GM10248 (cell line): ENCODE measurements at regions of chr3 and their contacts with region 1.

Region 1: DNA sequence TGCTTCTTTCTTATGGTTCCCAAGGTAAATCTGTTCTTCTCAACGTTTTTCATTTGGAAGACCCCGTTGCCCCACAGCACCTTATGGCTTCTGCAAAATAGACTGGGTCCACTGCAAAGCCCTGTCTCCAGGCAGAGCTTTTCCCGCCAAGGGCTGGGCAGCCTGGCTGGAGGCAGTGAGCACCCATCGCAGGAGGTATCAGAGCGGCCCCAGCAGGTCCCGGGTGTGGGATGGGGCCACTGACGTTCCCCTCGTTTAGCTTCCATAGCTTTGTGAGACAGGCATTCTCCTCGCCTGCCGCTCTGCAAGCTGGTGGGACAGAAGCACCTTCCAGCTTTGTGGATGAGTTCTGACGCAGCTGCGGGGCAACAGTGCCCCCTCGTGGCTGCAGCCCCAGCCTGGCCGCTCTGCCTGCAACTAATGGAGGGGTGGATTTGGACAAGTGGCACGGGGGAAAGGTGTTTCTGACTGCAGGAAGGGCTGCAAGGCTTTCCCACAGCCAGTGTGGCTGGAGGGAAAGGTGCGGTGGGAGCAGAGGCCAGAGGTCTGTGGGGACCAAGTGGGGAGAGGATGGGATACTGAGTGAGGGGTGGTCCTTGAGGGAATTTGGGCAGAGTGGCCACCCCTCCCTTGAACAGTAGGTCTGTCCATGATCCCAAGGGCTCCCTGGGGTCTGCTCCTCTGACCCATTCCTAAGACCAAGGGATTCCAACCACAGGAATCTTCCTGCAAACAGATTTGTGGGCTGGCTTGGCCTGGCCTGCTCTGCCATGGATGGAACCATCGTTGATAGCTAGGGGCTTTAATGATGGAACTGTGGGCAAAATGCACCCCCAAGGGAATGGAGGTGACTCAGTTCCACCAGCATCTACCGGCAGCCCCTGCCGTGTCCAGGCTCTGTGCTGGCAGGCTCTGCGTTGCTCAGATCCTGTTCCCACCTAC is 99.4 kb downstream of the FBLN2 start:
- DNase-seq: peak; percentile 88
- CTCF ChIP-seq: peak; percentile 98

Region 2: GRCh38 chr3:13479581-13480339 is 168.6 kb before region 1 on chr3 and contains the start of gene HDAC11:
- CTCF ChIA-PET with region 1: interaction called, 19 read pairs
- POLR2A ChIA-PET with region 1: no interaction called
- DNase-seq: peak; percentile 100
- CTCF ChIP-seq: peak; percentile 6

Region 3: GRCh38 chr3:13484851-13485590 is 163.3 kb before region 1 on chr3:
- CTCF ChIA-PET with region 1: interaction called, 19 read pairs
- POLR2A ChIA-PET with region 1: no interaction called
- DNase-seq: no peak
- CTCF ChIP-seq: no peak

Region 4: GRCh38 chr3:13495921-13496723 is 152.2 kb before region 1 on chr3:
- CTCF ChIA-PET with region 1: interaction called, 155 read pairs
- POLR2A ChIA-PET with region 1: no interaction called
- DNase-seq: peak; percentile 77
- CTCF ChIP-seq: peak; percentile 97

Region 5: DNA sequence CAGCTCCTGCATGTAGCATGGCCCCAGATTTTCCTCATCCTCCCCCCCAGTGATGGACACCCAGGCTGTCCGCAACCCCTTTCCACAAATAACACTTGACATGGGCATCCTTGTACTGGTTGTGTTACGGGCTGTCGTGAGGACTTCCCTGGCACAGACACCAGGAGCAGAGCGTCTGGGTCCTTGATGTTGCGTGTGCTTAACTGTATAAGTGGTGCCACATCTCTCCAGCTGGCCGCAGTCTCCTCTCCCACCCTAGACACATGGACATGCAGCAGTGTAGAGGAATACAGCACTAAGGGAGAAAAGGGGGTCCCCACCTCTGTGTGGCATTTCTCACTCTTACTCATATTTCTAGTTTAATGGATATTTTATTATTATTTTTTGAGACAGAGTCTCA is 42.8 kb before region 1 on chr3:
- CTCF ChIA-PET with region 1: no interaction called
- POLR2A ChIA-PET with region 1: no interaction called
- DNase-seq: no peak
- CTCF ChIP-seq: no peak

Region 6: GRCh38 chr3:13623099-13623654 is 25.2 kb before region 1 on chr3:
- CTCF ChIA-PET with region 1: interaction called, 15 read pairs
- POLR2A ChIA-PET with region 1: no interaction called
- DNase-seq: no peak
- CTCF ChIP-seq: no peak